Mammary epithelial cell (primary cell): ENCODE measurements at regions of chr19 and their contacts with region 1.

Region 1: GRCh38 chr19:49224856-49225255 is 67.3 kb downstream of the TRPM4 start:
- DNase-seq: peak; percentile 63
- H3K4me3 ChIP-seq: no peak overlapping the region
- H3K27ac ChIP-seq: no peak overlapping the region
- H3K4me1 ChIP-seq: no peaks in the 10 kb centered on the region
- H3K27me3 ChIP-seq: no peaks in the 10 kb centered on the region
- CTCF ChIP-seq: peak; percentile 55 to 66

Region 2: GRCh38 chr19:48795055-48795684 is 429.7 kb before region 1 on chr19:
- CTCF ChIA-PET with region 1: no interaction called
- dilution Hi-C with region 1: no loop called
- in situ Hi-C with region 1: loop called in 1 of 2 experiments (anchors 25 kb)
- intact Hi-C with region 1: no loop called
- DNase-seq: peak; percentile 88
- H3K4me3 ChIP-seq: peak overlapping the region; percentile 17 to 53 (median 38)
- H3K27ac ChIP-seq: peak overlapping the region; percentile 31
- H3K4me1 ChIP-seq: peaks cover 24% of the 10 kb centered on the region
- H3K27me3 ChIP-seq: no peaks in the 10 kb centered on the region
- CTCF ChIP-seq: peak; percentile 77 to 97

Region 3: DNA sequence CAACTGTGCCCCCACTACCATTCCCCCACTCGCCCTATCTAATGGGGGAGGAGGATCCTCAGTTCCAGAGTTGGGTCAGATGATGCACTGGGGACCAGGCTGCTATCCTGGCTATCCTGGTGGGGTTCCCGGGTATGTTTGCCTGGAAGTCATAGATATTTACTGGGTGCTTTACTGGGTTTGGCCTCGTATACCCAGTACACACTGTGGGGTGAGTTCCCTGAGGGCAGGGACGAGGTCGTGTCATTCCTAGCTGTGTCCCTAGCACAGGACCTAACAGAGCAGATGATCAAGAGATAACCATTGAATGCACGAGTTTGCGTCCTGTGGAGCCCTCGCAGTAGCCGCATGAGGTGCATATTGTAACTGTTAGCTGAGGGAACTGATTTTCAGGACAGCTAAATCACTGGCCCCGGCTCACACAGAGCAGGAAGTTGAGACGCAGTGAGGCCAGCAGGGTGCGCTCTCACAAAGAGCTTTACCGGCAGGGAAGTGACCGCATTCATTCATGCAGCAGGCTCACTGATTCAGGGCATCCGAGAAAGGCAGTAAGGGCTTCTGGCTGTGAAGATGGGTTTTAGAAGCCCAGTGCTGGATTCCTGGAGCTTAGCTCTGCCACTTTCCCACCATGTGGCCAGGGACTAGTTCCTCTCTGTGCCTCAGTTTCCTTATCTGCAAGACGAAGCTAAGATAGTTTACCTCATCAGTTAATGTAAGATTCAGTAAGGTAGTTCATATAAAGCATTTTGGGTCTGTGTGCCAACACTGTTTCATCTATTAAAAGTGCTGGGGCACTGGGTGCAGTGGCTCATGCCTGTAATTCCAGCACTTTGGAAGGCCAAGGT is 225.2 kb before region 1 on chr19:
- CTCF ChIA-PET with region 1: no interaction called
- dilution Hi-C with region 1: no loop called
- in situ Hi-C with region 1: no loop called
- intact Hi-C with region 1: loop called (anchors 1 kb)
- DNase-seq: peak; percentile 52
- H3K4me3 ChIP-seq: no peak overlapping the region
- H3K27ac ChIP-seq: no peak overlapping the region
- H3K4me1 ChIP-seq: peaks cover 3% of the 10 kb centered on the region
- H3K27me3 ChIP-seq: no peaks in the 10 kb centered on the region
- CTCF ChIP-seq: peak; percentile 79 to 84

Region 4: GRCh38 chr19:49097455-49098288 is 127.2 kb before region 1 on chr19:
- CTCF ChIA-PET with region 1: no interaction called
- dilution Hi-C with region 1: no loop called
- in situ Hi-C with region 1: no loop called
- intact Hi-C with region 1: loop called (anchors 1 kb)
- DNase-seq: peak; percentile 67
- H3K4me3 ChIP-seq: no peak overlapping the region
- H3K27ac ChIP-seq: no peak overlapping the region
- H3K4me1 ChIP-seq: peaks cover 7% of the 10 kb centered on the region
- H3K27me3 ChIP-seq: no peaks in the 10 kb centered on the region
- CTCF ChIP-seq: peak; percentile 98 to 100

Region 5: DNA sequence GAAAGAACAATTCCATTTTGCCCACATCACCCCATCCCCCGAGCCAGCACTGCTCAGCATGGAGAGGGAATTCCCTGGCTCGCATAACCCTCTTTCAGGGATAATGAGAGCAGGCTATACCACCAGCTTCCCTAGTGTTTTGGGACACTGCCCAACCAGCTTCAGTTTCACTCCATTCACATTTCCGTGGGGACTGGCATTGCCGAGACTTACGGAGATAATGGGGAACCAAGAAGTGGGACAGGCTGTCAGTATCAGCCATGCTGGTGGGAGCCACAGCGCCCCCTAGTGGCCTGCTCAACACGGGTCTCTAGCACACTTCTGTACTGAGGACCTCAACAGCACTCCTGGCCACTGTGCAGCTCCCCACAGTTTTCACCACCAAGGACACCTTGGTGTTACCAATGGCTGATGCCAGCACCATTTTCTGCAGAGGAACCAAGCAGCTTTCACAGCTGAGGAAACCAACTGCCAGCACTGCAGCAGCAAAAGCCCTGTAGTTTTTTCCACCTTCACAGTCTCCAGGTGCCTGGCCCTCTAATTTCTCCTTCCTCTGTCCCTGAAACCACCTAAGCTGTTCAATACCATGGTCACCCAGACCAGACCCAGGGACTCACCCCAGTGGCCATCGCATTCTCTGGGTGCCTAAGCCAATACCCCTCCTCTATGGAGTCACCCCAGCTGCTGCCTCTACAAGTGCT is 76.5 kb after region 1 on chr19:
- CTCF ChIA-PET with region 1: interaction called, 11 read pairs
- dilution Hi-C with region 1: no loop called
- in situ Hi-C with region 1: no loop called
- intact Hi-C with region 1: loop called (anchors 1 kb)
- DNase-seq: peak; percentile 57
- H3K4me3 ChIP-seq: peak overlapping the region in 1 of 3 experiments; percentile 31
- H3K27ac ChIP-seq: no peak overlapping the region
- H3K4me1 ChIP-seq: no peaks in the 10 kb centered on the region
- H3K27me3 ChIP-seq: peaks cover 2% of the 10 kb centered on the region
- CTCF ChIP-seq: peak; percentile 95 to 97

Region 6: DNA sequence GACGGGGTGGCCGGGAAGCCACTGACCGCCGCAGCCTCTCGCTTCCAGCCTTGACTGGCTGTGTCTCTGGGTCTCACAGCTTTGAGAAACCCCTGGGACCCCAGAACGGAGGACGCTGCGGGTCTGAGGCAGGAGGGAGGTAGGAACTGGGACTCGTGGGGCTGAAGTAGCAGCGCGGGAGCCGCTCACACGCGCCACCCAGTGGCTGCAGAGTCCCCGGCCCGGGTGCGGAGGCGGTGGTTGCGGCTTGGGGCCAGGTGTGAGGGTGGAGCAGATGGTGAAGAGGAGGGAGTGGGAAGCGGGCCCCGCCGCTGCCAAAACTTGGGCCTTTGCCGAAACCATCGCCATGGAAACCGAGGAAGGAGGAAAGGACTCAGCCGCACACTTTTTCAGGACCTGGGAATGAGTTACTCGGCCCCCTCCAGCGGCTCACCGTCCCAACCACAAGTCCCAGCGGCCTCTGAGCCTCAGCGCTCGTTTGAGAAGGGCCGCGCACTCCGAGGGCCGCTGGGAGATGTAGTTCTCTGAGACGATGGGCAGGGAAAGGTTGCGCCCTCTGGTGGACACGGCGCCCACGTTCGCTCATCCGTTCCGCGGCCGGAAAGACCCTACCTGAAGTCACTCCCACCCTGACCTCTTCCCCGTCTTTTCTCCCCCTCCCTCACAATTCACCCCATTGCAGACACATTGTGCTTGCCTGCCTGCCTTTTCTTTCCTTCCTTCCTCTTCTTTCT is 218.7 kb after region 1 on chr19:
- CTCF ChIA-PET with region 1: no interaction called
- dilution Hi-C with region 1: no loop called
- in situ Hi-C with region 1: no loop called
- intact Hi-C with region 1: loop called (anchors 1 kb)
- DNase-seq: peak; percentile 89
- H3K4me3 ChIP-seq: peak overlapping the region; percentile 66 to 88 (median 82)
- H3K27ac ChIP-seq: peak overlapping the region; percentile 54
- H3K4me1 ChIP-seq: no peaks in the 10 kb centered on the region
- H3K27me3 ChIP-seq: peaks cover 11% of the 10 kb centered on the region
- CTCF ChIP-seq: peak; percentile 66 to 91

Region 7: DNA sequence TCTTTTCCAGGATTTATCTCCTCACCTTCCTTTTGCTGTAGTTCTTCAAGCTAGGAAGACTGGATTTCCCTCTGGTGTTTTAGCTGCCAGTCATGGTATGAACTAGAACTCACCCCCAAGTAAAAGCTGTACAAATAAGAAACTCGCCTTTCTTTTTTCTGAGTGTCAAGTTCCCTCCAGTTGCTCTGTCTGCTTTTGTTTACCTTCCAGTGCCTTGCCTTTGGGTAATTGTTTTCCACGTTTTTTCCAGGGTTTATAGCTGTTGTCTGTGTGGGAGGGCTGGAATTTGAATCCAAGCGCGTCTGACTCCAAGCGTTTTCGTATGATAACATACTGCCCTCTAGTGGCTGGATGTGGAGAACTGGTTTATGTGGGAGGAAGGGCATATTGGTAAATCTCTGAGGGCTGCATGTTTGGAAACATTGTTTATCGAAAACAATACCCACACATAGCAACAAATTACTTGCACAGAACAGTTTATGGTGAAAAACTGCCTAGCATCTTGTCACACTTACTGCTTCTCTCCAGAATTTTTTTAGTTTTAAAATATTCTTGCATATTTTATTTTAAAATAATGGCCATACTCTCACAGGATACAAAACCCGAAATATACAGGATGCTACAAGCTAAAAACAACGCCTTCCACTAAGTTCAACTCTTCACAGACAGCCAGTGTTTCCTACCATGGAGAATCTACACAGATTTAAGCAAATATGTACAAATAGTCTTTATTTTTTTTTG is 322.1 kb after region 1 on chr19:
- CTCF ChIA-PET with region 1: no interaction called
- dilution Hi-C with region 1: no loop called
- in situ Hi-C with region 1: no loop called
- intact Hi-C with region 1: loop called (anchors 2 kb)
- DNase-seq: peak; percentile 72
- H3K4me3 ChIP-seq: no peak overlapping the region
- H3K27ac ChIP-seq: no peak overlapping the region
- H3K4me1 ChIP-seq: no peaks in the 10 kb centered on the region
- H3K27me3 ChIP-seq: no peaks in the 10 kb centered on the region
- CTCF ChIP-seq: peak; percentile 81 to 85